IMR-90 (cell line): ENCODE measurements at regions of chr7 and their contacts with region 1.

Region 1: GRCh38 chr7:28419717-28420116 is 7.4 kb downstream of the CREB5 start:
- DNase-seq: peak; percentile 98
- ATAC-seq: peak; percentile 94
- H3K4me3 ChIP-seq: no peak overlapping the region
- H3K27ac ChIP-seq: peak overlapping the region; percentile 6; the same call in 1 of the 2 replicates
- H3K4me1 ChIP-seq: peaks cover 4% of the 10 kb centered on the region
- H3K27me3 ChIP-seq: no peaks in the 10 kb centered on the region
- CTCF ChIP-seq: no peak
- POLR2A ChIP-seq: no peak
- RAD21 ChIP-seq: no peak

Region 2: DNA sequence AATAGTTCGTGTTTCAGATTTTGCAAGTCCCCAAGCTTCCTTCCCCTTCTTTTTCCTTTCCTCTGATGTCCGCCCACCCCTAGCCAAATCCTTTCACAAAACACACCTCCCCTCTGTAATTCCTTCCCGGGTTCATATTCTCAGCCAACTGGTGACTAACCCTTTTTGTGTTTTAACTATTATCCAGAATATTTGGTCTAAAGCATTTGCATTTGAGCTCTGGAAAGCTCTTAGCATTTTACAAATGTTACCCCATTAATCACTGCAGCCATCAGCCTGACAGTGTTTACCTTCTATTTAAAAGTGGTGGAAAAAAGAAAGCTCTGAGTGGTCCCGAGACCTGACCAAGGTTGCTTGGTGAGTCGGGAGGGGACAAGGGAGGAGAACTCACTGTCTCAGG is 131.6 kb after region 1 on chr7:
- CTCF ChIA-PET with region 1: no interaction called
- POLR2A ChIA-PET with region 1: no interaction called
- dilution Hi-C with region 1: no loop called
- in situ Hi-C with region 1: no loop called
- intact Hi-C with region 1: loop called (anchors 5 kb)
- DNase-seq: peak; percentile 52
- ATAC-seq: peak; percentile 77
- H3K4me3 ChIP-seq: no peak overlapping the region
- H3K27ac ChIP-seq: no peak overlapping the region
- H3K4me1 ChIP-seq: peaks cover 2% of the 10 kb centered on the region; the same call in 1 of the 2 replicates
- H3K27me3 ChIP-seq: 0 out of 2 replicates have a peak, but pooled peaks cover 1% of the 10 kb centered on the region
- CTCF ChIP-seq: no peak
- POLR2A ChIP-seq: no peak
- RAD21 ChIP-seq: no peak